ENCODE measurements at regions of chr11 and their contacts with region 1.

Region 1: GRCh38 chr11:21205205-21205604 is 535.8 kb downstream of the NELL1 start:
- DNase-seq: no peak
- ATAC-seq: no peak
- H3K4me3 Mint-ChIP-seq: no peak overlapping the region
- H3K27ac Mint-ChIP-seq: no peak overlapping the region
- H3K4me1 Mint-ChIP-seq: no peaks in the 10 kb centered on the region
- H3K27me3 Mint-ChIP-seq: no peaks in the 10 kb centered on the region

Region 2: GRCh38 chr11:21148376-21148775 is 56.8 kb before region 1 on chr11:
- CTCF ChIA-PET with region 1: no interaction called
- POLR2A ChIA-PET with region 1: no interaction called
- intact Hi-C with region 1: loop called in 1 of 2 experiments (anchors 10 kb)
- DNase-seq: no peak
- ATAC-seq: no peak
- H3K4me3 Mint-ChIP-seq: no peak overlapping the region
- H3K27ac Mint-ChIP-seq: no peak overlapping the region
- H3K4me1 Mint-ChIP-seq: no peaks in the 10 kb centered on the region
- H3K27me3 Mint-ChIP-seq: no peaks in the 10 kb centered on the region

Region 3: GRCh38 chr11:21307874-21308273 is 102.7 kb after region 1 on chr11:
- CTCF ChIA-PET with region 1: no interaction called
- POLR2A ChIA-PET with region 1: no interaction called
- intact Hi-C with region 1: no loop called
- DNase-seq: no peak
- ATAC-seq: no peak
- H3K4me3 Mint-ChIP-seq: no peak overlapping the region
- H3K27ac Mint-ChIP-seq: no peak overlapping the region
- H3K4me1 Mint-ChIP-seq: no peaks in the 10 kb centered on the region
- H3K27me3 Mint-ChIP-seq: no peaks in the 10 kb centered on the region

Measured in activated CD4-positive, alpha-beta T cell treated with anti-CD3 and anti-CD28 coated beads for 36 hours (primary cell).